Vagina (tissue), 2 donors: ENCODE measurements at regions of chr17 and their contacts with region 1.

Region 1: GRCh38 chr17:78112518-78113226 is 15.9 kb downstream of the TMC6 start:
- DNase-seq: no peak
- H3K4me3 ChIP-seq: no peak overlapping the region
- H3K27ac ChIP-seq: no peak overlapping the region
- H3K4me1 ChIP-seq: peaks cover 25% of the 10 kb centered on the region
- H3K27me3 ChIP-seq: no peaks in the 10 kb centered on the region
- CTCF ChIP-seq: peak; percentile 96 to 99 (median 99)
- POLR2A ChIP-seq: no peak

Region 2: DNA sequence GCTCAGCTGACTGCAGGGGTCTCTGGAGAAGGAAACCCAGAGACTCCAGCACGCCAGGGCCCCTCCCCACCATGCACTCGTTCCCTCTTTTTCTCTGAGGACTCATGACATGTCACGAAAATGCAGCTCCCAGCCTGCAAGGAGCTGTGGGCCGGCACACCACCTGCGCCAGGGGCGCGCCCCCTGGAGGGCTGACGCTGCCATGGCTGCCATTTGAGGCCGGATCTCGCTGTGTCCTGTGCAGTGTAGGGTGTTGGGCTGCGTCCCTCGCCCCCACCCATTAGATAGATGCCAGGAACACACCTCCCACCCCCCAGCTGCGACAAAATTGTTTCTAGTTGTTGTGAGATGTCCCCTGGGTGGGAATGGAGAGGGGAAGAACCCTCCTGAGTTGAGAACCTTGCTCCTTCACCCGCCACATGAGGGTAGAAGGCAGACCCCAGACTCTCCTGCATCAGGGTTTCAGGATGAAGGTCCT is 63.9 kb after region 1 on chr17:
- intact Hi-C with region 1: loop called (anchors 5 kb)
- DNase-seq: no peak
- H3K4me3 ChIP-seq: no peak overlapping the region
- H3K27ac ChIP-seq: no peak overlapping the region
- H3K4me1 ChIP-seq: peaks cover 55% of the 10 kb centered on the region
- H3K27me3 ChIP-seq: no peaks in the 10 kb centered on the region
- CTCF ChIP-seq: peak; percentile 66 to 95 (median 70)
- POLR2A ChIP-seq: no peak

Region 3: DNA sequence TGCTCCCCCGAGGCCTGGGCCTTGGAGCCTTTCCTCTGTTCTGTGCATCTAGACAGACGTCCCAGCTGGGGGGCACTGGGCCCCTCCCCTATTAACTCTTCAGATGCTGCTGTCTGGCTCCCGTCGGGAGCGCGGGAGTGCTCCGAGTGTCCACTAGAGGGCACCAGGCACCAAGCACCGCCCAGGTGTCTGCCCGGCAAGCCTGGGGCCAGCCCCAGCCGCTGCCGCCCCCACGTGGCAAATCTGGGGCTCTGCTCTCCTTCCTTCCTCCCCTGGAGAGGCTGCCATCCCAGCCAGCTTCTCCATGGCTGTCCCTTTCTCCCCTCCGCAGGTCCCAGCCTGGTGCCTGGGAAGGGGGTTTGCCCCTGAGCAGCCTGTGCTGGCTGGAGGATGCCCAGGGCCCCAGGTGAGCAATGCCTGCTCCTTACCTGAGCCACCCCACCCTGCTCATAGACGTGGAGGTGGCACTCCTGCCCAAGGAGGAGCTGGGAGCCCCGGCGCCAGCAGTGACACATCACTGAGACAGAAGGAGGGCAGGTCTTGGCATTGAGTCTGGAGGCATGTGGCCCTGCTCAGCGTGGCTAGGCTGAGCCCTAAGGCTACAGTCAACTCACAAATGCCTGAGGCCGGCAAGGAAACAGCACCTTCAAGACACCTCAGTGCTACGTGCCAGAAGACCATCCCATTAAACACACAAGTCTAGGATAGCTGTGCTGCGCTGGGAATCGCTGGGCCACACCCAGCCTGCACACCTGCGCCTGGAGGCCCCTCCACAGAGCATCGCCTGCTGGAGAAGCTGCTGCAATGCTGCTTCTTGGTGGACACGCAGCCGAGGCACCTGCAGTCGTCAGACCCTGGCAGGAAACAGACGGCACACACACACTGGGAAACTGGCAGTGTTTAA is 138.5 kb after region 1 on chr17:
- intact Hi-C with region 1: loop called (anchors 5 kb)
- DNase-seq: no peak
- H3K4me3 ChIP-seq: no peak overlapping the region
- H3K27ac ChIP-seq: no peak overlapping the region
- H3K4me1 ChIP-seq: peaks cover 25% of the 10 kb centered on the region
- H3K27me3 ChIP-seq: no peaks in the 10 kb centered on the region
- CTCF ChIP-seq: peak; percentile 97 to 99 (median 97)
- POLR2A ChIP-seq: no peak